MCF 10A (cell line): ENCODE measurements at regions of chr12 and their contacts with region 1.

Region 1: GRCh38 chr12:98939350-98939749 is 294.3 kb downstream of the APAF1 start:
- DNase-seq: peak; percentile 42
- H3K4me3 Mint-ChIP-seq: no peak overlapping the region
- H3K27ac Mint-ChIP-seq: no peak overlapping the region
- H3K4me1 Mint-ChIP-seq: no peaks in the 10 kb centered on the region
- H3K27me3 Mint-ChIP-seq: no peaks in the 10 kb centered on the region
- CTCF ChIP-seq: peak; percentile 38

Region 2: DNA sequence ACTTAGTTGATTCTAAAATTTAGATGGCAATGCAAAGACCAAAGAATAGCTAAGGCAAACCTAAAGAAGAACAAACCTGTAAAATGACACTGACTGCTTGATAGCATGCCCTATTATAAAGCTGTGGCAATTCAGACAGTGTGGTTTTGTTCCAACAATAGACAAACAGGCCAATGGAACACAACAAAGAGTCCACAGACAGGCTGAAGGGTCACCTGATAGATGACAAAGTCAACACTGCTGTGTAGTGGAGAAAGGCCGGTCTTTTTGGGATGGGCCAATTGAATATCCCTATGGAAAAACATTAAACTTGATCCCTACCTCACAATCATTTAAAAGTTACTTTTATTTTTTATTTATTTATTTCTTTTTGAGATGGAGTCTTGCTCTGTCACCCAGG is 379.7 kb before region 1 on chr12:
- CTCF ChIA-PET with region 1: no interaction called
- POLR2A ChIA-PET with region 1: no interaction called
- intact Hi-C with region 1: no loop called
- DNase-seq: no peak
- H3K4me3 Mint-ChIP-seq: no peak overlapping the region
- H3K27ac Mint-ChIP-seq: no peak overlapping the region
- H3K4me1 Mint-ChIP-seq: no peaks in the 10 kb centered on the region
- H3K27me3 Mint-ChIP-seq: no peaks in the 10 kb centered on the region
- CTCF ChIP-seq: no peak

Region 3: GRCh38 chr12:98725476-98726247 is 213.7 kb before region 1 on chr12:
- CTCF ChIA-PET with region 1: no interaction called
- POLR2A ChIA-PET with region 1: no interaction called
- intact Hi-C with region 1: loop called (anchors 10 kb)
- DNase-seq: peak; percentile 55
- H3K4me3 Mint-ChIP-seq: no peak overlapping the region
- H3K27ac Mint-ChIP-seq: no peak overlapping the region
- H3K4me1 Mint-ChIP-seq: no peaks in the 10 kb centered on the region
- H3K27me3 Mint-ChIP-seq: no peaks in the 10 kb centered on the region
- CTCF ChIP-seq: peak; percentile 19

Region 4: DNA sequence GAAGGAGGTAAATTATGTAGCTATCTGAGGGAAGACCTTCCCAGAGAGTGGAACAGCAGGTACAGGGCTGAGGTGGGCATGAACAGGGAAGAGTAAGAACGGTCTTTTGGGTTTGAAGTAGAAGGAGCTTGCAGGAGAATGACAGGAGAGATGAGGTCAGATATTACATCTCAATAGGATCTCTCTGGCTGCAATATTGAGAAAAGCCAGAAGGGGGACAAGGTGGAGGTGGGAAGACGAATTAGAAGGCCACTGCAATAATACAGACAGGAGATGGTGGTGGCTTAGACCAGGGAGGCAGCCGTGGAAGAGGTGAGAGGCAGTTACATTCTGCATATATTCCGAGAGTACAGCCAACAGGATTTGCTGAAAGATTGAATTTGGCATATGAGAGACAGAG is 15.9 kb after region 1 on chr12:
- CTCF ChIA-PET with region 1: interaction called, 13 read pairs
- POLR2A ChIA-PET with region 1: no interaction called
- intact Hi-C with region 1: no loop called
- DNase-seq: peak; percentile 61
- H3K4me3 Mint-ChIP-seq: no peak overlapping the region
- H3K27ac Mint-ChIP-seq: no peak overlapping the region
- H3K4me1 Mint-ChIP-seq: no peaks in the 10 kb centered on the region
- H3K27me3 Mint-ChIP-seq: no peaks in the 10 kb centered on the region
- CTCF ChIP-seq: peak; percentile 55